Endothelial cell of umbilical vein (primary cell): ENCODE measurements at regions of chr2 and their contacts with region 1.

Region 1: DNA sequence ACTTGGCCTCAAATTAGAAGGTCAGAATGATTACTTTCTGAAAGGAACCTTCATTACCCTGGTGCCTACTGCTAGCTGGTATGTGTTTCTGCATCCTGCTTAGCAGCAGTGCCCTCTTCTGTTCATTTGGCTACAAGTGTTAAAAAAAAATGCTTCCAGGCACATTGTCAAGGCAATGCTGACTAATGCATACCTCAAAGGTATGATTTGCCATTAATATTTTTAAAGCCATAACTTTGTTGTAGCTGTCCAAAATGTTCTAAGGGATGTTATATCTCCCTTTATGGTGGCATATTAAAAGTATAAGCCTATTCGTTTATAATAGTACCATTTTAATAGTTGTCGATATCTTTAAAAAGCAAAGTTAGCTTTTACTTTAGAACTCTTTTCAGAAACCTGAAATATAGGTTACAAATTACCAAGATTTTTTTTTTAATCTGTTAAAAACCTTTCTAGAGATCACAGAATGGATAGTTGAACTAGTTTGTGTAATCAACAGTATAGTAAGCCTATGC is 52.0 kb upstream of the FAM171B start:
- DNase-seq: peak; percentile 84
- H3K4me3 ChIP-seq: no peak overlapping the region
- H3K27ac ChIP-seq: no peak overlapping the region
- H3K4me1 ChIP-seq: no peaks in the 10 kb centered on the region
- H3K27me3 ChIP-seq: no peaks in the 10 kb centered on the region
- CTCF ChIP-seq: peak; percentile 59
- POLR2A ChIP-seq: no peak

Region 2: DNA sequence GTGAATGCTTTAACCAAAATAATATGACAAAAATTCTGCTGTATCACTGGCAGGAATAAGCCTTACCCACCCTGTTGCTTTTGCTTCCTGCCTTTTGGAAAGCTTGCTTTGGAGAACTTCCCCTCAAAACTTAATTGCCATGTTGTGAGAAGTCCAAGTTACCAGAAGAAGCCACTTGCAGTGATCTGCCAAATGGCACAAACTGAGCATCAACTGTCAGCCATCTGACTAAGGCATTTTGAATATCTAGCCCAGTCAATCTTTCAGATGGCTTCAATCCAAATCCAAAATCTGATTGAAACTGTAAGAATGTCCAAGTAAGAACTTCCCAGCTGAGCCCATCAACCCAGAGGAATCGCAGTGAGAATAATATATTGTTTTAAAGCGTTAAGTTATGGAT is 372.3 kb before region 1 on chr2:
- CTCF ChIA-PET with region 1: no interaction called
- POLR2A ChIA-PET with region 1: no interaction called
- dilution Hi-C with region 1: no loop called
- intact Hi-C with region 1: loop called (anchors 10 kb)
- DNase-seq: no peak
- H3K4me3 ChIP-seq: no peak overlapping the region
- H3K27ac ChIP-seq: no peak overlapping the region
- H3K4me1 ChIP-seq: no peaks in the 10 kb centered on the region
- H3K27me3 ChIP-seq: no peaks in the 10 kb centered on the region
- CTCF ChIP-seq: no peak
- POLR2A ChIP-seq: no peak

Region 3: GRCh38 chr2:186498838-186499237 is 143.0 kb before region 1 on chr2:
- CTCF ChIA-PET with region 1: interaction called, 188 read pairs
- POLR2A ChIA-PET with region 1: no interaction called
- dilution Hi-C with region 1: no loop called
- intact Hi-C with region 1: loop called (anchors 1 kb)
- DNase-seq: no peak
- H3K4me3 ChIP-seq: no peak overlapping the region
- H3K27ac ChIP-seq: no peak overlapping the region
- H3K4me1 ChIP-seq: no peaks in the 10 kb centered on the region
- H3K27me3 ChIP-seq: no peaks in the 10 kb centered on the region
- CTCF ChIP-seq: no peak
- POLR2A ChIP-seq: no peak

Region 4: DNA sequence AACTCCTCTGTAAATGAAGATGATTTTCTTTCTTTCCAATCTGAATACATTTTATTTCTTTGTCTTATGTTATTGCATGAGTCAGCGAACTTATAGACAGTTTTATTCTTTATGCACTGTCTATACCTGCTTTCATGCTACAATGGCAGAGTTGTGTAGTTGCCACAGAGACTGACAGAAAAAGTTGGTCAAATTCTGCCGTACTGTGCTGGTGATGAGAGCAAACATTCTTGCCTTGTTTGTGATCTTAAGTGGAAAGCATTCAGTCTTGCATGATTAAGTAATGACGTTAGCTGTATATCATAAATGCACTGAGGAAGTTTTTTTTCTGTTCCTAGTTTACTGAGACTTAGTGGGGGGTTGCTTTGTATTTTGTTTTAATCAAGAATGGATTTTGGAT is 122.9 kb before region 1 on chr2:
- CTCF ChIA-PET with region 1: interaction called, 15 read pairs
- POLR2A ChIA-PET with region 1: no interaction called
- dilution Hi-C with region 1: no loop called
- intact Hi-C with region 1: no loop called
- DNase-seq: no peak
- H3K4me3 ChIP-seq: no peak overlapping the region
- H3K27ac ChIP-seq: no peak overlapping the region
- H3K4me1 ChIP-seq: no peaks in the 10 kb centered on the region
- H3K27me3 ChIP-seq: no peaks in the 10 kb centered on the region
- CTCF ChIP-seq: no peak
- POLR2A ChIP-seq: no peak

Region 5: GRCh38 chr2:186617771-186618170 is 24.1 kb before region 1 on chr2:
- CTCF ChIA-PET with region 1: no interaction called
- POLR2A ChIA-PET with region 1: no interaction called
- dilution Hi-C with region 1: no loop called
- intact Hi-C with region 1: no loop called
- DNase-seq: no peak
- H3K4me3 ChIP-seq: no peak overlapping the region
- H3K27ac ChIP-seq: no peak overlapping the region
- H3K4me1 ChIP-seq: no peaks in the 10 kb centered on the region
- H3K27me3 ChIP-seq: no peaks in the 10 kb centered on the region
- CTCF ChIP-seq: no peak
- POLR2A ChIP-seq: no peak

Region 6: DNA sequence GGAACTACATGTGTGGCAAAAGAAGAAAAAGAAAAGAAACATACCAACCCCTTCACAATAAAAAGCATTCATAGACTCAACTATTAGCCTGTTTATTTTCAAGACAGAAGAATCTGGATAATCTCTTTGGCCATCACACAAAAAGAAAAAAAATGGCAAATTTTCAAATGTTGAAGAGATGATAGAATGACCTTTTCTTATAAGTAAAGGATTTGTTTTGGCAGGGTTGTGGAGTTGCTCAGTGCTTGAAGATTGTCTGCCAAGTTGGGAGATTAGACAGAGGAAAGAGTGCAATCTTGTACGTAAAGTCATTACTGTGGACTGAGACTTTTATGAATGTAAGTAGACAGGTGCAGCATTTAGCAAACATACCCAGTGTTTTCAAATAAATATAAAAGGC is 33.5 kb after region 1 on chr2:
- CTCF ChIA-PET with region 1: no interaction called
- POLR2A ChIA-PET with region 1: no interaction called
- dilution Hi-C with region 1: no loop called
- intact Hi-C with region 1: no loop called
- DNase-seq: no peak
- H3K4me3 ChIP-seq: no peak overlapping the region
- H3K27ac ChIP-seq: no peak overlapping the region
- H3K4me1 ChIP-seq: no peaks in the 10 kb centered on the region
- H3K27me3 ChIP-seq: no peaks in the 10 kb centered on the region
- CTCF ChIP-seq: no peak
- POLR2A ChIP-seq: no peak

Region 7: DNA sequence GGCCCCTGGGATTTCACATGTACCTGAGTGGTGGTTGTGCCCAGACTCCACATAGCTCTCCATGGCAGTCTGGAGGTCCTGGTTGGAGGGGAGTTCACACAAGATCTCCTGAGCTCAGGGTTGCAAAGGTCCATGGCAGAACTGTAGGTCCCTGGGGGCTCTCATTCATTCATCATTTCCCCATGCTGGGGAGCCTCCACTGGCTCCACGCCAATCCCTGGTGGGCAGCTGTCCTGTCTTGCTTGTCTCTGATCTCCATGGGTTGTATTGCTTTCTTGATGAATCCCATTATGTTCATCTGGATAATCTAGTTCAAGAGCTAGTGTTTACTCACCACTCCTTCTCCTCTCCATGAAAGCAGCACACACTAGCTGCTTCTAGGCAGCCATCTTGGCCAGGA is 164.7 kb after region 1 on chr2:
- CTCF ChIA-PET with region 1: no interaction called
- POLR2A ChIA-PET with region 1: no interaction called
- dilution Hi-C with region 1: no loop called
- intact Hi-C with region 1: no loop called
- DNase-seq: no peak
- H3K4me3 ChIP-seq: no peak overlapping the region
- H3K27ac ChIP-seq: no peak overlapping the region
- H3K4me1 ChIP-seq: peaks cover 6% of the 10 kb centered on the region
- H3K27me3 ChIP-seq: no peaks in the 10 kb centered on the region
- CTCF ChIP-seq: no peak
- POLR2A ChIP-seq: no peak